Panc1 (cell line): ENCODE measurements at regions of chr7 and their contacts with region 1.

Region 1: DNA sequence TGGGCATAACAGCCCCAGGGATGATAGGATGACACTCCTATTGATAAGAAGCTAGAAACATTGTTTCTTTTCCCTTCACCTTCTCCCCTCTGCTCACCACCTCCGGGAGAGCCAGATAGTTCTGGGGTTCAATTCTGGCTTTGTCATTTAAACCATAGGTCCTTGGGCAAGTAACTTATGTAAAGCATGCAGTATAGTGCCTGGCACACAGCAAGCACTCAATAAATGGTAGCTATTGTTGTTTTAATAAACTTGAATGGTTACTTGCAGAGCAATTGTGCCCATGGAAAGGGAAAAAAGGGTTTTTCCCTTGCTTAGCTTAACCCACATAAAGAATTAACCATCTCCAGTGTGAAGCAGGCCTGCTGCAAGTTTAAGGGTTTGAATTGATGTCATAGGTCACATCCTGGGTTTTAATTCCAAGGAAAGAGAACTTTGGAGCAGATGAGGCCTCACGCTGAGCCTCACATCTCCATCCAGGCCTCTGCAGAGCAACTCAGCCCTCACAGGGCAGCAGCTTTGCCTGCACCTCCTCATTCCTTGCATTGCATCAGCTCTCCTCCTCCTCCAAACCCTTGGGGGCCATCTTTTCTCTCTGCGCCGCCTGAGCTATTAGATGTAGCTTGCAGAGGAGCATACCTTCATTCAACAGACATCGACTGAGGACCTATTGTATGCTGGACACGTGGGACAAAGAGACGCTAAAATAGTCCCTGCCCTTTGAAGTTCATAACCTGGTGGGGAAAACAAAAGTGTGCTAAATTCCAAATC is 22.9 kb downstream of the ZNF775 start:
- DNase-seq: no peak
- ATAC-seq: no peak
- H3K4me3 ChIP-seq: no peak overlapping the region
- H3K27ac ChIP-seq: peak overlapping the region; percentile 44; the same call in 1 of the 2 replicates
- H3K4me1 ChIP-seq: peaks cover 62% of the 10 kb centered on the region
- H3K27me3 ChIP-seq: no peaks in the 10 kb centered on the region
- CTCF ChIP-seq: no peak

Region 2: GRCh38 chr7:150326657-150327268 is 75.3 kb before region 1 on chr7:
- CTCF ChIA-PET with region 1: no interaction called
- POLR2A ChIA-PET with region 1: interaction called, 16 read pairs
- in situ Hi-C with region 1: no loop called
- intact Hi-C with region 1: no loop called
- DNase-seq: no peak
- ATAC-seq: no peak
- H3K4me3 ChIP-seq: no peak overlapping the region
- H3K27ac ChIP-seq: no peak overlapping the region
- H3K4me1 ChIP-seq: peaks cover 18% of the 10 kb centered on the region
- H3K27me3 ChIP-seq: no peaks in the 10 kb centered on the region
- CTCF ChIP-seq: no peak

Region 3: GRCh38 chr7:150425670-150426069 is 23.6 kb after region 1 on chr7:
- CTCF ChIA-PET with region 1: no interaction called
- POLR2A ChIA-PET with region 1: no interaction called
- in situ Hi-C with region 1: no loop called
- intact Hi-C with region 1: no loop called
- DNase-seq: no peak
- ATAC-seq: no peak
- H3K4me3 ChIP-seq: no peak overlapping the region
- H3K27ac ChIP-seq: no peak overlapping the region
- H3K4me1 ChIP-seq: peaks cover 7% of the 10 kb centered on the region; the same call in 1 of the 2 replicates
- H3K27me3 ChIP-seq: no peaks in the 10 kb centered on the region
- CTCF ChIP-seq: no peak

Region 4: DNA sequence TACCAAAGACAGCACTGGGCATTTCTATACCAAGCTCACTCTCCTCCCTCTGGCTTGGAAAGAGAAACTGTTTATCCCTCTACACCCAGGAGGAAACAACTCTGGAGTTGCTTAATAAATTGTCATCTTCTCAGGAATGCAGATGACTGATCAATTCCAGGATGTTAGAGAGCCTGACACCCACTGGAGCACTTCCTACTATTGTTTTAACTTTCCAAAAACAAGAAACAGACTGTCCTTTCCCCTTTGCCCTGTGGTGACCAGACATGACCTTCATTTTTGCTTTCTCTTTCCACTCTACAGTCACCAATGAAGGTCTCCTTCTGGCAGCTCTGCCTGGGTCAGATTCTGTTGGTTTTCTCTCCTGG is 184.7 kb after region 1 on chr7:
- CTCF ChIA-PET with region 1: no interaction called
- POLR2A ChIA-PET with region 1: no interaction called
- in situ Hi-C with region 1: no loop called
- intact Hi-C with region 1: no loop called
- DNase-seq: no peak
- ATAC-seq: no peak
- H3K4me3 ChIP-seq: no peak overlapping the region
- H3K27ac ChIP-seq: no peak overlapping the region
- H3K4me1 ChIP-seq: no peaks in the 10 kb centered on the region
- H3K27me3 ChIP-seq: no peaks in the 10 kb centered on the region; the same call in 1 of the 2 replicates
- CTCF ChIP-seq: no peak